ENCODE measurements at regions of chr18 and their contacts with region 1.

Region 1: GRCh38 chr18:58768293-58768974 is 96.2 kb upstream of the ZNF532 start:
- H3K4me3 Mint-ChIP-seq: no peak overlapping the region
- H3K27ac Mint-ChIP-seq: no peak overlapping the region
- H3K4me1 Mint-ChIP-seq: peaks cover 5% of the 10 kb centered on the region
- H3K27me3 Mint-ChIP-seq: peaks cover 61% of the 10 kb centered on the region

Region 2: DNA sequence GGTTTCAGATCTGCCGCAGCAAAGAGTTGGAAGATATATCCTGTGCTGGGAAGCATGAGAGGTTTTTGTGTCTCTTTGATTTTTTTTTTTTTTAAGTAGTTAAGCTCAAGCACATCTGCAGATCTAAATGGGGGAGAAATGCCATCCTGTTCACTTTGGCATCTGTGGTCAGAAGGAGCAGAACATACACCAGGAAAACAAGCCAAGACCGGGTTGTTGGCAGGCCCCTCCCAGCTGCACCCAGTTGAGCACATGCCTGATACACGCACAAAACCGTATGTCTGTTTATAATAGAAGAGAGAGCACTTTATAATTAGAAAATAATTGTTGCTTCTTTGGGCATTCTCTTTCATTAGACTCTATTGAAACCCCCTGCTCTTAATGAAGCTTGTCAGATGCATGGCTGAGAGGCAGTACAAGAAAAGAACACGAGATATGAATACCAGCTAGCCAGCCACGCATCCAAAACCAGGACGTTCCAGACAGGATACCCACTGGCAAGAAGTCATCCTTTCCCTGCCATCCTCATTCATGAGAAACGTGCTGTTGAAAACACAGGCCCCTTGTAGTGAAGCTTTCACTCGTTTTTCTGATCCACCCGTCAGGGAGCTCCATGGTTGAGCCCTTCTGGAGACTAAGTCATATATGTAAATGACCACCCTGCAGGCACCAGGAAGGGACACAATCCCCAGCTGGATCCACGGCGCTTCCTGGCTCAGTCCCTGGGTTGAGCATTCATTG is 291.7 kb before region 1 on chr18:
- intact Hi-C with region 1: no loop called
- H3K4me3 Mint-ChIP-seq: no peak overlapping the region
- H3K27ac Mint-ChIP-seq: no peak overlapping the region
- H3K4me1 Mint-ChIP-seq: no peaks in the 10 kb centered on the region
- H3K27me3 Mint-ChIP-seq: peaks cover 5% of the 10 kb centered on the region

Region 3: DNA sequence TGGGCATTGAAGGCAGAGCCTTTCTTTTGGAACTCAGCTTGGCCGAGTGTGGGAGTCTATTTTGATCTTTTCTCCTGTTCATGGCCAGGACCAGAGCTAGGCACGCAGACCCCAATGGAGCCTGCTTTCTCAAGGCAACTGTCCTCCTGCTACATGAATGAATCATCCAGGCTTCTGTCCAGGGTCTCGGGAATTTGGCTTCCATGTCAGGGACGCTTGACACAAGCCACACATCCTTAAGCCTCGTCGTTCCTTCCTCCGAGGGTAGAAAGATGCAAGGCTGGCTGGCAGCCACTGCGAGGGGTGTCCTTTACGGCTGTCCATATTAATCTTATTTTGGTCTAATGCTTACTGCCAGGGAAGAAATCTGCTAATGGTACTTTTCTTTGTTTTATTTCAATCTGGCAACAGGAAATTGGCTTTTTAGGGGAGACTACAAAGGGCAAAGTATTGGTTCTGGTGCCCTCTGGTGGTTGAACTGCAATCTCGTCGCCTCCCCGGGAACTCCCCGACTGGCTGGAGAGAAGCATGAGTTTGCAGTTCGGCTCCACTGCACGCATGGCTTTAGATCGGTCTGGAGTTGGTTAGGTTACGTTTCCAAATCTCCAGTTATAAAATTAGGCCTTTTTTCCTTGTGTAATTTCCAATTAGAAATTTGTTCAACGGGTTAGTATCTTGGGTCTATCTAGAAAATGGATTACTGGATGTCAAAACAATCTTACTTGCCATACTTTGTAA is 274.7 kb before region 1 on chr18:
- intact Hi-C with region 1: loop called (anchors 1 kb)
- H3K4me3 Mint-ChIP-seq: no peak overlapping the region
- H3K27ac Mint-ChIP-seq: no peak overlapping the region
- H3K4me1 Mint-ChIP-seq: no peaks in the 10 kb centered on the region
- H3K27me3 Mint-ChIP-seq: peaks cover 39% of the 10 kb centered on the region

Region 4: DNA sequence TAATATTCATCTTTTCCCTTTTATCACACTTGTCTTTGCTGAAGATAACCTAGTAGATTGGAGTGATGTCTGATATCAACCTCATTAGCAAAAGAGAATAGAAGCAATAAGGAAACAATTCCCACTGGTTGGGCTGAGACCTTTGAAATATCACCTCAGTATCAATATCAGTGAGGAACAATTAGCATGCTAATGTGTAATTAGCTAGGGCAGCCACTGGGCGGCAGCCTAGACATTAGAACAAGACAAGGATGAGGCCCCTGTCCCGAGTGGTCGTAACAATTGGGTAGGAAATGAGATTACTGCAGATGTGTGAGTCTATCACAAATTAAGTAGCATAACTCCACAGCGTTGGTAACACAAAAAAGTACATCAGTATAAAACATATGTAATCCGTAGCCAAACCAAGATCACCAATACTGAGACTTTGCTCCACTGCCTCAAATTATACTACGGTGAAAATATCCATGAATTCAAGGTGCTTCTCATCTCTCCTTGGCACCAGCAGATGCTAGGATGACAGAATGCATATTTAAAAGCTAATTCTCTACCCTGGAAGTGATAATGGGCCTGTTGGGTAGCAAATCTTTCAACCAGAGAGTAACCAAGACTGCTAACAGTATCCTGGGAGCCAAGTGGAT is 238.6 kb before region 1 on chr18:
- intact Hi-C with region 1: loop called (anchors 1 kb)
- H3K4me3 Mint-ChIP-seq: no peak overlapping the region
- H3K27ac Mint-ChIP-seq: no peak overlapping the region
- H3K4me1 Mint-ChIP-seq: peaks cover 24% of the 10 kb centered on the region
- H3K27me3 Mint-ChIP-seq: peaks cover 17% of the 10 kb centered on the region

Region 5: DNA sequence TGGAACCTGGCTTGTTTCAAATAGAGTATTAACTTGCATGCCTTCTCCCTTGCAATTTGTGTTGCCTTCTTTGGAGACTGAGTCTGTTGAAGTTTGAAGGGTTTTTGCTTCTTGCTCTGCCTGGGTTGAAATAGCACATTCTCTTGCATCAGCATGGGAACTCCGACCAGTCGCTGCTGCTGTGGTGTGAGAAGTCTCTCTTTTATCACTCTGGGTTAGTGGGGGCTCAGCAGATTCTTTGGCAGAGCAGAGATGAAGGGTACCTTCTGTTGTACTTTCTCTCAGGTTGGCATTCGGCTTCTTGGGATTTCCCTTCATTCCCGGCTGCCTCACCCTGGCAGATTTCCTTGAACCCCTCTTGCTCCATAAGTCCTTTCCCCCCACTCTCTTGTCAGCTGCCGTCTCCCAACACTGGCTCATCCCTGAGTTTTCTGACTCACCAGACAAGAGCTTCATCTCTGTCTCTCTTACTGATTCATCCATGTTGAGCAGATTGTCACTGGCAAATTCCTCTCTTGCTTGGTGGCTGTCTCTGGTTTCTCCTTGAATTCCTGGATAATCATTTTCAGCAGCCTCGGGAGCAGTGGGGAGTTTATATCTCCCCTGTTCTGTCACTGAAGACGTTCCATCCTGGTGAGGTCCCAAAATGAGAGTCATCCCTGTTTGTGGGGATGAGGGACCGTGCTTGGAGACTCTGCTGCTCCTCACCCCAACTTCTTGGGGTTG is 189.4 kb before region 1 on chr18:
- intact Hi-C with region 1: no loop called
- H3K4me3 Mint-ChIP-seq: no peak overlapping the region
- H3K27ac Mint-ChIP-seq: no peak overlapping the region
- H3K4me1 Mint-ChIP-seq: peaks cover 27% of the 10 kb centered on the region
- H3K27me3 Mint-ChIP-seq: peaks cover 45% of the 10 kb centered on the region

Region 6: DNA sequence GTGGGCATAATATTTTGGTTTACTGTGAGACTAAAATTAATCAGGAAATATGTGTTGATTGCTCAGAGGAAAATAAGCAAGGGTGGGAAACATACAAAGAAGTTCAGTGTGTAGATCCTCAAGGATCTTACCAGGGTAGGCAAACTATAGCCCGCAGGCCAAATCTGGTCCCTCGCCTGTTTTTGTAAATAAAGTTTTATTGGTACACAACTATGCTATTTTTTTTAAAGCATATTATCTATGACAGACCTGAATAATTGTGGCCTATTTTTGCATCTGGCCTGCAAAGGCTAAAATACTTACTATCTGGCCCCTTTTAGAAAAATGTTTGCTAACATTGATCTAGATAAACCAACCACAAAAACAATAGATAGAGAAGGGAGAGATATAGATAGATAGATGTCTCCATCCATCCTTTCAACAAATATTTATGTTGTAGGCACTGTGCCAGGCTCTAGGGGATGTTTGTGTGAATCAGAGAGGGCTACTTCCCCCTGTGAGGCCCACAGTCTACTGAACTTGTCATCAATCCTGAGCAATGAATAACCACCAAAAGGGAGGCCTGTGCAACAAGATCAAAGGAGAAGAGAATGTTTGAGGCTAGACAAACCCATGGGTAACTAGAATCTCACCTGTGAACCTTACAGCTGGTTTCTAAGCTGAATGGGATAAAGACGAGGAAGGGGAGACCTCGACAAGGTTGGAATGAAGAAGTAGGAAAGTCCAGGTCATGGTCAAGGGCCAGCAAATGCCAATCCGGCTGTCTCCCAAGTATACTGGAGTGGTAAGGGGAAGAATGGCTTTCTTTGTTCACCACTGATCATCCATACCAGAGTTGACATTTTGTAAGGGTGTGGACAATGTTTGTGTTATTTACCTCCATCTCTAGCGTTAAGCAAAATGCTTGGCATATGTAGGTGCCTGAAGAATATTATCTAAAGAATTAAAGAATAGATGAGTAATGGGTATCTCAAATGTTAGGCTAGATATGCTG is 163.1 kb before region 1 on chr18:
- intact Hi-C with region 1: loop called (anchors 10 kb)
- H3K4me3 Mint-ChIP-seq: no peak overlapping the region
- H3K27ac Mint-ChIP-seq: no peak overlapping the region
- H3K4me1 Mint-ChIP-seq: peaks cover 34% of the 10 kb centered on the region
- H3K27me3 Mint-ChIP-seq: peaks cover 14% of the 10 kb centered on the region

Region 7: GRCh38 chr18:59070181-59070912 is 301.9 kb after region 1 on chr18:
- intact Hi-C with region 1: loop called (anchors 5 kb)
- H3K4me3 Mint-ChIP-seq: no peak overlapping the region
- H3K27ac Mint-ChIP-seq: no peak overlapping the region
- H3K4me1 Mint-ChIP-seq: no peaks in the 10 kb centered on the region
- H3K27me3 Mint-ChIP-seq: peaks cover 2% of the 10 kb centered on the region